ENCODE measurements at regions of chr4 and their contacts with region 1.

Region 1: GRCh38 chr4:140153718-140154571 is at the start of gene MAML3:
- DNase-seq: peak; percentile 66 to 96
- H3K4me3 ChIP-seq: peak within 1 kb of the TSS; percentile 79 to 91
- H3K27ac ChIP-seq: peak within 1 kb of the TSS; percentile 94 to 97
- H3K4me1 ChIP-seq: peaks cover 0 to 4% of the 10 kb centered on the region in 2 donors
- H3K27me3 ChIP-seq: no peaks in the 10 kb centered on the region
- CTCF ChIP-seq: no peak
- total RNA-seq, gene MAML3: 4.7 TPM

Region 2: GRCh38 chr4:139453371-139454110 is 700.4 kb before region 1 on chr4:
- intact Hi-C with region 1: loop called (anchors 10 kb)
- DNase-seq: peak; percentile 95 to 99
- H3K4me3 ChIP-seq: peak overlapping the region; percentile 92 to 93
- H3K27ac ChIP-seq: peak overlapping the region; percentile 94 to 98
- H3K4me1 ChIP-seq: peaks cover 5 to 21% of the 10 kb centered on the region in 2 donors
- H3K27me3 ChIP-seq: no peaks in the 10 kb centered on the region
- CTCF ChIP-seq: peak in 2 of 3 experiments; percentile 4 to 28

Region 3: DNA sequence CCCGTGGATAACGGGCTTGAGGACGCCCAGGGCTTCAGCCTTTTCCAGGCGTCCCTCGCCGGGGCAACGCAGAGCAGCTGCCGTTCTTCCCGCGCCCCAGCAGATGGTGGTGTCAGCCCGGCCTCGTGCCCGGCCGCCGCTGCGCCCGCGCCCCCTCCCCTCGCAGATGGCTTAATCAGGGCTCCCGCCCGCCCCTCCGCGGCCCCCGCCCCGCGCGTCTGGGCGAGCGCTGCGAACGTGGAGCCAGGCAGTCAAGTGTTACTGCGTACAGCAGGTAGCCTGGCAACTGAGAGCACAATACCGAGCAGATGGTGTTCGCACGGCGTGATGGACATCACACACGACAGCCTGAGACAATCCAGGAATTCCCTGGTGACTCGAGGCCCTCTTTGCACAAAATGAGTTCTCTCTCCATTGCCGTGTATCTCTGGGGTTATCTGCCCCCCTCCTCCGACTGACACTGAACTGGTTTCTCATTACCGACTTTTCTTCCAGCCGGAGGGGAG is 419.0 kb before region 1 on chr4:
- intact Hi-C with region 1: loop called (anchors 1 kb)
- DNase-seq: peak; percentile 51 to 93
- H3K4me3 ChIP-seq: peak overlapping the region; percentile 56 to 66
- H3K27ac ChIP-seq: peak overlapping the region; percentile 69 to 81
- H3K4me1 ChIP-seq: peaks cover 0 to 20% of the 10 kb centered on the region in 2 donors
- H3K27me3 ChIP-seq: no peaks in the 10 kb centered on the region
- CTCF ChIP-seq: peak; percentile 89 to 94 (median 91)

Region 4: DNA sequence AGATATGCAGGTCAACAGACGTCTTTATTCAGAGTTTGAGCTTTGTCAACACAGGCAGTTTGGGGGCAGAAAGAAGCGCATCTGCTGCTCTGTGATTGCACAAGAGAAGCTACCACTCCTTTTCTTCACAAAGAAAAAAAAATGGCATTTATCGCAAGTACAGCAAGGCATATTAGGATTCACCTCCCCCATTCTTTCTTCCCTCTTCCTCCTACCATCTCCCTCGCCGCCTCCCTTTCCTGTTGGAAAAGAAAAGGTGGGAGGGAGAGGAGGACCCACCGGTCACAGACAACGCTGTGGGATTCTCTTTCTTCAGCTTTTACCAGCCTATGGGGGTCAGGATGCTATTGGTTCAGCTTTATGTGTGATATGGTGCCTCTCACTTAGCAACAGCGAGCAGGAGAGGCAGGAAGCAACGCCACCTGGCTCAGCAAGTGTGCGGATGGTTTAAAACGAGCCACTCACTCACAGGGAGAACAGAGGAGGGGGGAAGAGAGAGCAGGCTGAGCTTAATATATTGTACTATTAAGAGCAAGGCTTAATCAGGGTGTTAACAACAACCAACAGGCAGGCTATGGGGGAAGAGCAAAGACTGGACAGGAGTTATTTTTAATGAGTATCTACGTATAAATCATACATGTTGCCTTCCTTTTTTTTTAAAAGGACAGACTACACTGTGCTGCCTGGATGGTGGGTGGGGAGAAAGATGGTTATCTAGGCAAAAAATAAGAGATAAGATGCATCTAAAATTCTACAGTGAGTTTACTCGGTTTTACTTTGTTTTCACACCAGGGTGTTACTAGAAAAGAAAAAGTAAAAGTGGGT is 104.7 kb before region 1 on chr4:
- intact Hi-C with region 1: loop called (anchors 1 kb)
- DNase-seq: peak; percentile 18 to 71
- H3K4me3 ChIP-seq: peak overlapping the region; percentile 52 to 62
- H3K27ac ChIP-seq: peak overlapping the region; percentile 67 to 71
- H3K4me1 ChIP-seq: peaks cover 3 to 9% of the 10 kb centered on the region in 2 donors
- H3K27me3 ChIP-seq: no peaks in the 10 kb centered on the region
- CTCF ChIP-seq: peak in 1 of 3 experiments; percentile 30

Region 5: GRCh38 chr4:140252742-140253555 is 99.0 kb after region 1 on chr4:
- intact Hi-C with region 1: loop called (anchors 1 kb)
- DNase-seq: peak in 1 of 2 donors; percentile 76
- H3K4me3 ChIP-seq: peak overlapping the region; percentile 64 to 79
- H3K27ac ChIP-seq: peak overlapping the region; percentile 83 to 84
- H3K4me1 ChIP-seq: peaks cover 3 to 7% of the 10 kb centered on the region in 2 donors
- H3K27me3 ChIP-seq: no peaks in the 10 kb centered on the region
- CTCF ChIP-seq: peak; percentile 77 to 88 (median 83)

Measured in ascending aorta (tissue), 2 donors.